ENCODE measurements at regions of chr20 and their contacts with region 1.

Region 1: GRCh38 chr20:51404298-51405060 is 138.0 kb downstream of the NFATC2 start:
- DNase-seq: no peak
- ATAC-seq: no peak
- H3K4me3 ChIP-seq: no peak overlapping the region
- H3K27ac ChIP-seq: no peak overlapping the region
- H3K4me1 ChIP-seq: peaks cover 3% of the 10 kb centered on the region
- H3K27me3 ChIP-seq: no peaks in the 10 kb centered on the region
- CTCF ChIP-seq: no peak
- POLR2A ChIP-seq: no peak
- RAD21 ChIP-seq: no peak

Region 2: DNA sequence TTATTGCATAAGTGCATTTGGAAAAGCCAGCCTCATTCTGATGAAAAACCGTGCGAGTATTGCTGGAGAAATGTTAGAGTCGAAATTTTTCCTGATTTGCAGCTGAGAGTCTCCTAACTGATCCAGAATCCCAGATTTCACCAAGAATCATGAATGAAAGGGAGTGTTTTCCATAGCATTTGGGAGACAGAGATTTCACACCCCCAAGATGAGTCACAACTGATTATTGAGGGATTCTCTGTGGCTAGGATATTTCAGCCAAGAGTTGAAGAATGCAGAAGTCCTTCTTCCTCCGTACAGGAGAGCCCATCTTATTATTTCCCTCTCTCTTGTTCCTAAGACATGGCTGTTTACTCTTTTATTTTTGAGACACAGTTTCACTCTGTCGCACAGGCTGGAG is 480.1 kb after region 1 on chr20:
- CTCF ChIA-PET with region 1: no interaction called
- POLR2A ChIA-PET with region 1: no interaction called
- dilution Hi-C with region 1: no loop called
- in situ Hi-C with region 1: no loop called
- intact Hi-C with region 1: loop called (anchors 5 kb)
- DNase-seq: peak; percentile 10
- ATAC-seq: no peak
- H3K4me3 ChIP-seq: no peak overlapping the region
- H3K27ac ChIP-seq: no peak overlapping the region
- H3K4me1 ChIP-seq: no peaks in the 10 kb centered on the region
- H3K27me3 ChIP-seq: peaks cover 7% of the 10 kb centered on the region
- CTCF ChIP-seq: no peak
- POLR2A ChIP-seq: no peak
- RAD21 ChIP-seq: no peak

Region 3: GRCh38 chr20:52200870-52201269 is 796.4 kb after region 1 on chr20:
- CTCF ChIA-PET with region 1: no interaction called
- POLR2A ChIA-PET with region 1: no interaction called
- dilution Hi-C with region 1: no loop called
- in situ Hi-C with region 1: no loop called
- intact Hi-C with region 1: no loop called
- DNase-seq: peak; percentile 8
- ATAC-seq: no peak
- H3K4me3 ChIP-seq: no peak overlapping the region
- H3K27ac ChIP-seq: no peak overlapping the region
- H3K4me1 ChIP-seq: no peaks in the 10 kb centered on the region; the same call in 1 of the 2 replicates
- H3K27me3 ChIP-seq: peaks cover 3% of the 10 kb centered on the region
- CTCF ChIP-seq: no peak
- POLR2A ChIP-seq: no peak
- RAD21 ChIP-seq: no peak

Measured in IMR-90 (cell line).